Calu3 (cell line): ENCODE measurements at regions of chr16 and their contacts with region 1.

Region 1: GRCh38 chr16:9665851-9666271 is 516.4 kb downstream of the GRIN2A start:
- DNase-seq: peak; percentile 82
- H3K4me3 Mint-ChIP-seq: peak overlapping the region; percentile 56
- H3K27ac Mint-ChIP-seq: peak overlapping the region; percentile 97
- H3K4me1 Mint-ChIP-seq: peaks cover 66% of the 10 kb centered on the region
- H3K27me3 Mint-ChIP-seq: no peaks in the 10 kb centered on the region
- CTCF ChIP-seq: no peak

Region 2: GRCh38 chr16:9362050-9362449 is 303.8 kb before region 1 on chr16:
- CTCF ChIA-PET with region 1: no interaction called
- intact Hi-C with region 1: no loop called
- DNase-seq: no peak
- H3K4me3 Mint-ChIP-seq: no peak overlapping the region
- H3K27ac Mint-ChIP-seq: no peak overlapping the region
- H3K4me1 Mint-ChIP-seq: peaks cover 16% of the 10 kb centered on the region
- H3K27me3 Mint-ChIP-seq: no peaks in the 10 kb centered on the region
- CTCF ChIP-seq: no peak

Region 3: GRCh38 chr16:9479008-9479407 is 186.9 kb before region 1 on chr16:
- CTCF ChIA-PET with region 1: no interaction called
- intact Hi-C with region 1: no loop called
- DNase-seq: no peak
- H3K4me3 Mint-ChIP-seq: no peak overlapping the region
- H3K27ac Mint-ChIP-seq: no peak overlapping the region
- H3K4me1 Mint-ChIP-seq: no peaks in the 10 kb centered on the region
- H3K27me3 Mint-ChIP-seq: no peaks in the 10 kb centered on the region
- CTCF ChIP-seq: no peak

Region 4: DNA sequence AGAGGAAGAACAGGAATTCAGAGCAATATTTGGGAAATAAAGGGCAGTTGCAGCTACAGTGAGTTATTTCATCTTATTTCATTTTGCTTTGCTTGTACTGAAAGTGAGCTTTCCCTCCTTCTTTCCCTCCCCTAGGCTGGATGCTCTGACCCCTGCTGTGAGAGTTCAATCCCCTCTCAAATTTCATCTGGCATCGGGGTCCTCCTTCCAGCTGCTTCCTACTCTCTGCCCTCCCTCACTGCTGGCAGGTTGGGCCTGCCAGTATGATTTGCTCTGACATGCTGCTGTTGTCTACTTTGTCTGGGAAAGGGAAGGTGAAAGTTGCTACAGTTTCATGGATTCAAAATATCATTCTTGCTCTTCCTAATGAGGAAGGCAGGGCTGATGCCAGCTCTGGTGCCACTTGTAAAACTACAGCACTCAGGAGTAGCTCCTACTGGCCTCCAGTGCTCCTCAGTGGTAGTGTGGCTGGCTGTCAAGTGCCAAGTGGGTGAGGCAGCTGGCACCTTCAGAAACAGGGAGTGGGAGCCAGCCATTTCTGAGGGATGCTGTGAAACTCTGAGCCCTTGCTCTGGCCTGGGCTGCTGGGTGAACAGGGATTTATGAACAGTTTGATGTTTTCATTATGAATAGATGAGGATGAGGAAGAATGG is 165.8 kb before region 1 on chr16:
- CTCF ChIA-PET with region 1: no interaction called
- intact Hi-C with region 1: no loop called
- DNase-seq: no peak
- H3K4me3 Mint-ChIP-seq: no peak overlapping the region
- H3K27ac Mint-ChIP-seq: no peak overlapping the region
- H3K4me1 Mint-ChIP-seq: peaks cover 9% of the 10 kb centered on the region
- H3K27me3 Mint-ChIP-seq: peaks cover 46% of the 10 kb centered on the region
- CTCF ChIP-seq: no peak

Region 5: DNA sequence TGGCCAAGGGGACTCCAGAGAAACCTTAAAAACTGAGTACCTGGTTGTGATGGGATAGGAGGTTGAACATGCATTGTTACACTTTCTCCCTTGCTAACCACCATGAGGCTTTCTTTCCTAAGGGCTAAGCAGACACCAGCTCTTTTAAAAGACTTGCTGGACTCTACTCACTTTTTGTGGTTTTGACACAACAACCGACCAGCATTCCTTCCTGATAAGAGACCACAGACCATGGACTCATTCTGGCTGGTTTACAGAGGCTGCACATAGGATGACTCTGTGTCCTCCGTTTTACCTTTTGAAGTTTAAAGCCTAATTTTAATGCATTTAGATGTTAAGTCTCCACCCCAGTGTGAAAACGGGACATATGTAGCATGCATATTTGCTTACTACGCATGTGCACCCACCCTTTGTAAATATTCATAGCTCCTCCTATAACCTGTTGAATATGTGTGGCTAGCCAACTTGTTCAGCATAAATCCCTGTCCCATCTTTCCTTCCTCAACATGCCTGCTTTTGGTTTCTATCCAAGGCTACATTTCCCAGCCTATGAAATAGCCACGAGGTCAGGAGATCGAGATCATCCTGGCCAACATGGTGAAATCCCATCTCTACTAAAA is 40.5 kb after region 1 on chr16:
- CTCF ChIA-PET with region 1: interaction called, 6 read pairs
- intact Hi-C with region 1: loop called (anchors 5 kb)
- DNase-seq: peak; percentile 55
- H3K4me3 Mint-ChIP-seq: peak overlapping the region; percentile 10
- H3K27ac Mint-ChIP-seq: peak overlapping the region; percentile 14
- H3K4me1 Mint-ChIP-seq: peaks cover 43% of the 10 kb centered on the region
- H3K27me3 Mint-ChIP-seq: peaks cover 19% of the 10 kb centered on the region
- CTCF ChIP-seq: no peak

Region 6: GRCh38 chr16:9845661-9846361 is 179.9 kb after region 1 on chr16:
- CTCF ChIA-PET with region 1: interaction called, 7 read pairs
- intact Hi-C with region 1: loop called (anchors 1 kb)
- DNase-seq: peak; percentile 72
- H3K4me3 Mint-ChIP-seq: peak overlapping the region; percentile 48
- H3K27ac Mint-ChIP-seq: peak overlapping the region; percentile 99
- H3K4me1 Mint-ChIP-seq: peaks cover 51% of the 10 kb centered on the region
- H3K27me3 Mint-ChIP-seq: no peaks in the 10 kb centered on the region
- CTCF ChIP-seq: no peak

Region 7: GRCh38 chr16:10080036-10080772 is 414.3 kb after region 1 on chr16:
- CTCF ChIA-PET with region 1: no interaction called
- intact Hi-C with region 1: loop called (anchors 5 kb)
- DNase-seq: peak; percentile 81
- H3K4me3 Mint-ChIP-seq: peak overlapping the region; percentile 54
- H3K27ac Mint-ChIP-seq: peak overlapping the region; percentile 94
- H3K4me1 Mint-ChIP-seq: peaks cover 88% of the 10 kb centered on the region
- H3K27me3 Mint-ChIP-seq: no peaks in the 10 kb centered on the region
- CTCF ChIP-seq: no peak